Posterior vena cava (tissue), 2 donors: ENCODE measurements at regions of chr1 and their contacts with region 1.

Region 1: GRCh38 chr1:27662707-27663393 is 9.1 kb downstream of the IFI6 start:
- DNase-seq: peak; percentile 91

Region 2: GRCh38 chr1:27369001-27369582 is 293.8 kb before region 1 on chr1:
- intact Hi-C with region 1: no loop called
- DNase-seq: no peak

Region 3: DNA sequence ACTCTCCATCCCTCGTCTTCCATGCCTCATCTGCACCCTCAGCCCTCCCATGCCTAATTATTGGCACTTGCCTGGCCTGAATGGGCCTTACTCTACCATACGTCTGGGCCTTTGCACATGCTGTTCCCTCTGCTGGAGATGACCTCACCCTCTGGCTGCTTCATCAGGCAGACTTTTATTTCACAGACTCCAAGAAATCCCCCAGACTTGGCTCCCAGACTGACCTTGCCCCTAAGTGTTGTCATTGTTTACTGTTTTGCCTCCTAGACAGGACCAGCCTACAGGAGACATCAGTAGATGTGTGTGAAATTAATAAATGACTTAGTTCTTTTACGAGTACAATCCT is 53.7 kb before region 1 on chr1:
- intact Hi-C with region 1: loop called (anchors 2 to 5 kb)
- DNase-seq: no peak